HepG2 (cell line): ENCODE measurements at regions of chr7 and their contacts with region 1.

Region 1: GRCh38 chr7:80809545-80809944 is 109.3 kb downstream of the SEMA3C start:
- DNase-seq: no peak
- ATAC-seq: no peak
- H3K4me3 ChIP-seq: no peak overlapping the region
- H3K27ac ChIP-seq: no peak overlapping the region
- H3K4me1 ChIP-seq: no peaks in the 10 kb centered on the region
- H3K27me3 ChIP-seq: no peaks in the 10 kb centered on the region
- CTCF ChIP-seq: no peak
- EP300 ChIP-seq: no peak
- POLR2A ChIP-seq: no peak
- RAD21 ChIP-seq: no peak

Region 2: DNA sequence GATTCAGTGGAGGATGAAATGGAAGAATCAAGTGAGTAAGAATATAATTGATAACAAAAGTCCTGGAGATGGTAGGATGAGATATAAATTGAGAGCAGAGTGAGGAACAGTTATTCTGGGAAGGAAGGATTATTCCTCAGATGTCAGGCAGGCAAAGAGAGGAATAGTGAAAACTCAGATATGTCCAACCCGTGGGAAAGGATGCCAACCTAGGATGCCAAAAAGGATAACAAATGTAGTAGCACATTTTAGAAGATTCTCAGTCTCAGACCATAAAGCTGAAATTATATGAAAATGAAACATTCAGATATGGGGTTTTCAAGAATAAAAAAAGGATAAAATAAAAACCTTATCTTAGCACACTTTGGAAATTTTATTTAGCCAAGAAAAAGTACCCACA is 21.8 kb before region 1 on chr7:
- CTCF ChIA-PET with region 1: no interaction called
- POLR2A ChIA-PET with region 1: no interaction called
- in situ Hi-C with region 1: no loop called
- intact Hi-C with region 1: loop called (anchors 2 kb)
- DNase-seq: no peak
- ATAC-seq: no peak
- H3K4me3 ChIP-seq: no peak overlapping the region
- H3K27ac ChIP-seq: no peak overlapping the region
- H3K4me1 ChIP-seq: no peaks in the 10 kb centered on the region
- H3K27me3 ChIP-seq: no peaks in the 10 kb centered on the region
- CTCF ChIP-seq: no peak
- EP300 ChIP-seq: no peak
- POLR2A ChIP-seq: no peak
- RAD21 ChIP-seq: no peak